ENCODE measurements at regions of chr11 and their contacts with region 1.

Region 1: DNA sequence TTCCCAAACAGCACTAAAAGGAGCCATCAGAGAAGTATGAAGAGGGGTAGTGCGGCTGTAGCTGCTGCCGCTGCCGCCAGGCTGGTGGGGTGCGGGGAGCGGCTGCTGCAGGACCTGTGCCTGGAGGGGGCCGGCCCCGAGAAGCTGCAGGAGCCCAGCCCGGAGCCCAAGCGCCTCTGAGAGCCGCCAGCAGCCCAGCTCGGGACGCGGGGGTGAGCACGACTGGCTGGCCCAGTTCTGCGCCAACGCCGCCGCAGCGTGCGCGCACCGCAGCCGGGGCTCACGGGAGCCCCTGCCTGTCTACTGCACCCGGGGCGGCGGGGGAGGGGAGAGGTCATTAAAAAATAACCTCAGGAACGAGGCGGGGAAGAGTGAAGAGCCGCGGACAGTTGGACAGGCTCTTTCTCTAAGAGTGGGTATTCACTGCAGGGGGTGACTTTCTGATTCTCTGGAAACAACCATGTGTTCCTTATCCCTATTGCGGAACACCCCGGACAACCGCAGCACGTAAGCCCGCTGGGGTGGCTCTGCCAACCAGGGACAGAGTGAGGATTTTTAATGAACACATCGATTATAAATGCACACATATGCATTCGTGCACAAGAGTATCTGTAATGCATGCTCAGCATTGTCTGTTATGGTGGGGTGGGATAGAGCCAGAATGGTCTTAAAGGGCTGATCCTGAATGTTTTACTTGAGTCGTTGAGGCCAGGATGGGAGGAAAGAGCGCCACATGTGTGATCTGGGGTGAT is 453 bp downstream of the GAS2 start:
- DNase-seq: peak; percentile 33 to 66
- ATAC-seq: peak; percentile 83 to 96 (median 87)
- H3K4me3 ChIP-seq: peak overlapping the region; percentile 41 to 61 (median 54)
- H3K27ac ChIP-seq: peak overlapping the region; percentile 53 to 88 (median 83)
- H3K4me1 ChIP-seq: peaks cover 0 to 18% (median 0%) of the 10 kb centered on the region in 9 donors
- H3K27me3 ChIP-seq: peaks cover 0 to 59% (median 0%) of the 10 kb centered on the region in 7 donors
- CTCF ChIP-seq: peak in 4 of 9 donors; percentile 14 to 24 (median 17)

Region 2: GRCh38 chr11:22192642-22193347 is 474.1 kb before region 1 on chr11 and contains the start of gene ANO5:
- intact Hi-C with region 1: loop called in 1 of 10 experiments (anchors 10 kb)
- DNase-seq: peak; percentile 78
- ATAC-seq: peak; percentile 90 to 95 (median 94)
- H3K4me3 ChIP-seq: peak within 1 kb of the TSS; percentile 38 to 76 (median 63)
- H3K27ac ChIP-seq: peak within 1 kb of the TSS; percentile 62 to 93 (median 83)
- H3K4me1 ChIP-seq: peaks cover 0 to 28% (median 8%) of the 10 kb centered on the region in 9 donors
- H3K27me3 ChIP-seq: peaks cover 0 to 22% (median 0%) of the 10 kb centered on the region in 7 donors
- CTCF ChIP-seq: no peak
- total RNA-seq, gene ANO5: 51.3 to 83.0 (median 60.6) TPM

Region 3: GRCh38 chr11:22337596-22338485 is 329.0 kb before region 1 on chr11 and contains the start of gene SLC17A6:
- intact Hi-C with region 1: loop called in 1 of 10 experiments (anchors 5 kb)
- DNase-seq: peak in 1 of 2 donors; percentile 28
- ATAC-seq: peak in 2 of 8 donors; percentile 35 to 55
- H3K4me3 ChIP-seq: no peak within 1 kb of the TSS
- H3K27ac ChIP-seq: no peak within 1 kb of the TSS
- H3K4me1 ChIP-seq: peaks cover 0 to 8% (median 0%) of the 10 kb centered on the region in 9 donors
- H3K27me3 ChIP-seq: peaks cover 19 to 77% (median 71%) of the 10 kb centered on the region in 7 donors
- CTCF ChIP-seq: no peak
- total RNA-seq, gene SLC17A6: not detected

Region 4: GRCh38 chr11:22625448-22626287 is 41.2 kb before region 1 on chr11 and contains the start of gene FANCF:
- intact Hi-C with region 1: no loop called
- DNase-seq: peak; percentile 87 to 98
- ATAC-seq: peak; percentile 98 to 99 (median 98)
- H3K4me3 ChIP-seq: peak within 1 kb of the TSS; percentile 37 to 98 (median 84)
- H3K27ac ChIP-seq: peak within 1 kb of the TSS; percentile 60 to 94 (median 85)
- H3K4me1 ChIP-seq: peaks cover 0 to 22% (median 18%) of the 10 kb centered on the region in 9 donors
- H3K27me3 ChIP-seq: no peaks in the 10 kb centered on the region
- CTCF ChIP-seq: no peak
- total RNA-seq, gene FANCF: 3.1 to 7.6 (median 4.8) TPM

Region 5: DNA sequence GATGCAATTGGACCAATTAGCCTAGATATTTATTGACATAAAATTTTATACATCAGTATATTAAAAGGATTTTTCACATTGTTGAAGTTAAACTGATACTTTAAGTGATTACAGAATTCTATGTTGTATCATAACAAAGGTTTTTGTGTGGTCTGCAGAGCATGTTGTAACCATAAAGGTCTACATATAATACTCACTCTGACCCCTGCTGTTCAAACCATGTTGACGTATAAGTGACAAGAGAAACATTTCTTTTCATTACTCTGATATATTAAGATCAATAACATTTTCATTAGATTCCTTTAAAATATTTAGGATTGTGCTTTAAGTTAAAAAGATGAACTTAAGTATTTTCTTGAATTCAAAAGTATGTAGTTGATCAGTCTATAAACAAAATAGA is 63.5 kb after region 1 on chr11:
- intact Hi-C with region 1: loop called in 6 of 10 experiments (anchors 2 to 10 kb)
- DNase-seq: no peak
- ATAC-seq: no peak
- H3K4me3 ChIP-seq: no peak overlapping the region
- H3K27ac ChIP-seq: no peak overlapping the region
- H3K4me1 ChIP-seq: peaks cover 0 to 27% (median 0%) of the 10 kb centered on the region in 9 donors
- H3K27me3 ChIP-seq: no peaks in the 10 kb centered on the region
- CTCF ChIP-seq: peak in 7 of 9 donors; percentile 27 to 55 (median 35)

Region 6: GRCh38 chr11:22778642-22779041 is 111.8 kb after region 1 on chr11:
- intact Hi-C with region 1: loop called in 1 of 10 experiments (anchors 5 kb)
- DNase-seq: no peak
- ATAC-seq: no peak
- H3K4me3 ChIP-seq: no peak overlapping the region
- H3K27ac ChIP-seq: no peak overlapping the region
- H3K4me1 ChIP-seq: peaks cover 0 to 4% (median 0%) of the 10 kb centered on the region in 9 donors
- H3K27me3 ChIP-seq: no peaks in the 10 kb centered on the region
- CTCF ChIP-seq: peak in 3 of 9 donors; percentile 11 to 16 (median 14)

Measured in heart right ventricle (tissue), 16 donors.